ENCODE measurements at regions of chr17 and their contacts with region 1.

Region 1: DNA sequence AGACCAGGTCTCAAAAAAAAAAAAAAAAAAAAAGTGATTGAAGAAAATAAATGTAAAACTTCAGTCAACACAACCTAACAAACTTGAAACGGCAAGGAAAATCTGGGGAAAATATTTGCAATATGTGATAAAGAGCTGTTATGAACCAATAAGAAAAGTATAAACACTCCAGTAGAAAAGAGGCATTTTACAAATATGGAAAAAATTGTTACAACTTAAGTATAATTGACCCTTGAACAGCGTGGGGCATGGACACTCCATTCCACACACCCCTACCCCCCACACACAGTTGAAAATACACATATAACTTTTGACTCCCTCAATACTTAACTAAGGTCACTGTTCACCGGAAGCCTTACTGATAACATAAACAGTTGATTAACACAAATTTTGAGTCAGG is 20.7 kb downstream of the MFSD11 start:
- DNase-seq: no peak
- ATAC-seq: no peak
- H3K4me3 ChIP-seq: no peak overlapping the region
- H3K27ac ChIP-seq: no peak overlapping the region
- H3K4me1 ChIP-seq: peaks cover 0 to 5% (median 0%) of the 10 kb centered on the region in 9 donors
- H3K27me3 ChIP-seq: no peaks in the 10 kb centered on the region
- CTCF ChIP-seq: no peak

Region 2: DNA sequence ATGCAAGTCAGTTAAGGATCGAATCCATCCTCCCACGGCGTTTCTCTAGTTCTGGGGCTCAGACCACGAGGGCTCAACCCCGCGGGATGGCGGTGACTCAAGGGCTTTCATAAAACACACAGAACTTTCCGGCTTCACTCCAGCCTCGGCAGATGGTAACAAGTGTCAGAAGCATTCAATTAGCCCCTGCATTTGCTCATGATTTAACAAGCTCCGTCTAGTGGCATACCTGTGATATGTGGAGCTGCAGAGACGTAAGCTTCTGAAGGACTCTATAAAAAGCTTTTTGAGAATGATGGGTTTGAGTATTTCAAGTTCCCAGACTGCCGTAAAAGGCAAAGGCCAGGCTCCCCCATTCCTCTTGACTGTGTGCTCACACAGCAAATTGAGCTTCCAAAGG is 290.9 kb after region 1 on chr17:
- intact Hi-C with region 1: loop called in 1 of 10 experiments (anchors 2 kb)
- DNase-seq: no peak
- ATAC-seq: no peak
- H3K4me3 ChIP-seq: no peak overlapping the region
- H3K27ac ChIP-seq: no peak overlapping the region
- H3K4me1 ChIP-seq: no peaks in the 10 kb centered on the region
- H3K27me3 ChIP-seq: peaks cover 0 to 57% (median 49%) of the 10 kb centered on the region in 7 donors
- CTCF ChIP-seq: no peak

Measured in heart right ventricle (tissue), 16 donors.